Sigmoid colon (tissue), 7 donors: ENCODE measurements at regions of chr1 and their contacts with region 1.

Region 1: DNA sequence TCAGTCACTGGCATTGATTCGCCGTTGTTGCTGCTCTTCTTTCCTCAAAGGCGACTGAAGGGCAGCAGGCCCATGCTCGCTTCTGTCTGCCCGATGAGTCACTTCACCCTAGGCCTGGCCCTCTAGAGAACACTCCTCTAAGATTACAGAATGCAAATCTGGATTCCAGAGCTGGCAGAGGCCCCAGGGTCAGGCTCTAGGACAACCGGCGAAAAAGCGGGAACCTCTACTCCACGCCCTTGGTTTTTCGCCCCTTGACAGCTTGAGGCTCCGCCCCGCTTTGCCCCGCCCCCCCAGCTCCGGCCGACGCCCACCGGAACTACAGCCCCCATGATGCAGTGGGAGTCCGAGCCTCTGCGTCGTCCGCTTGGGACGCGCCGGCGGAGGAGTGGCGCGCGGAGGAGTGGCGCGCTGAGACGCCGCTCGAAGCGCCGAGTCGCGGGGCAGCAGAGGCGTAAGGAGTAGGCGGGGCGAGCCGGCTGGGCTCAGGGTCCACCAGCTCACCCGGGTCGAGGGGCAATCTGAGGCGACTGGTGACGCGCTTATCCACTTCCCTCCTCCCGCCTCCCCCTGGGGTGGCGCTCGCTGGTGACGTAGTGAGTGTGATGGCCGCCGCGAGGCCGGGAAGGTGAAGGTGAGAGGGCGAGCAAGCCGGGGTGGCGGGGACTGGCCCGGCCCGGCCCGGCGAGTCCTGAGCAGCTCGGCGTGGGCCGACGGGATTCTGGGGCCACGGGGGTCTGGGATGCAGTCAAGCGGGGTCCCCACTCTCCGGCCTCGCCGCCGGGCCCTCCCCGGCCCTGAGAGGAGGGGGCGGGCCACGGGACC is at the start of gene MFN2:
- DNase-seq: peak; percentile 98
- H3K4me3 ChIP-seq: peak within 1 kb of the TSS; percentile 71 to 98 (median 82)
- H3K27ac ChIP-seq: peak within 1 kb of the TSS; percentile 93 to 98 (median 97)
- H3K4me1 ChIP-seq: peaks cover 0 to 59% (median 44%) of the 10 kb centered on the region in 4 donors
- H3K27me3 ChIP-seq: no peaks in the 10 kb centered on the region
- CTCF ChIP-seq: no peak
- EP300 ChIP-seq: no peak
- POLR2A ChIP-seq: peak; percentile 21 to 45
- total RNA-seq, gene MFN2: 83.9 to 121 (median 96.9) TPM

Region 2: GRCh38 chr1:11907275-11908094 is 72.6 kb before region 1 on chr1:
- intact Hi-C with region 1: loop called (anchors 2 kb)
- DNase-seq: peak; percentile 97
- H3K4me3 ChIP-seq: peak overlapping the region in 3 of 4 donors; percentile 61 to 74 (median 65)
- H3K27ac ChIP-seq: peak overlapping the region; percentile 97 to 99 (median 98)
- H3K4me1 ChIP-seq: peaks cover 0 to 7% (median 0%) of the 10 kb centered on the region in 4 donors
- H3K27me3 ChIP-seq: no peaks in the 10 kb centered on the region
- CTCF ChIP-seq: peak; percentile 69 to 85 (median 72)
- EP300 ChIP-seq: no peak
- POLR2A ChIP-seq: no peak

Region 3: DNA sequence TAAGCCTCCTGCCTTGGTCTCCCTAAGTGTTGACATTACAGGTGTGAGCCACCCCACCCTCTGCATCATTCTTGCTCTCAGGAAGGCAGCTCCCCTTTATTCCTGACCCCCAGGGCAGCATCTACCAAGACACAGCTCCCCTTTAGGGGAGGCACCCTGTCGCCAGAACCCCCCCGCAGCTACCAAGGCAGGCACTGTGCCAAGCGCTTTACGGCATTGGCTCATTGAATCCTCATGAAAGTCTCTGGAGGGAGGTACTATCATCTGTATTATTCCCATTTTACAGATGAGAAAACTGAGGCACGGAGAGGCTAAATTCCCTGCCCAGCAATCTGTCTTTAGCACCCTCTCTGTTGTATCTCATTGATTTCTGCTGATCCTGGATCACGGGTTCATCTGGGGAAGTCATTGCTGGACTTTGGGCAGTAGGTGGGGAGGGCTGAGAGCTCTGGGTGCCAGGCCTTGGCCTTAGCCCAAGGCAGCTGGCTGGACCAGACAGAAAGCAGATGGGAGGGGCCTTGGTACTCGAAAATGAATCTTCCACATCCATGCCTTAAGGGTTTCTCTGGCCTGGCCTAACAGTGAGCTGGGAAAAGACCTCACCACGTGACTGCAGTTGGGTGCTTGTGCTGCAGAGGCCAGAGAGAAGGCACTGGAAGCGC is 39.7 kb before region 1 on chr1:
- intact Hi-C with region 1: loop called (anchors 5 kb)
- DNase-seq: peak; percentile 91
- H3K4me3 ChIP-seq: no peak overlapping the region
- H3K27ac ChIP-seq: peak overlapping the region; percentile 42 to 76 (median 60)
- H3K4me1 ChIP-seq: peaks cover 0 to 56% (median 46%) of the 10 kb centered on the region in 4 donors
- H3K27me3 ChIP-seq: no peaks in the 10 kb centered on the region
- CTCF ChIP-seq: no peak
- EP300 ChIP-seq: peak in 1 of 4 donors; percentile 35
- POLR2A ChIP-seq: no peak